Activated CD4-positive, alpha-beta T cell treated with anti-CD3 and anti-CD28 coated beads for 36 hours (primary cell): ENCODE measurements at regions of chr19 and their contacts with region 1.

Region 1: DNA sequence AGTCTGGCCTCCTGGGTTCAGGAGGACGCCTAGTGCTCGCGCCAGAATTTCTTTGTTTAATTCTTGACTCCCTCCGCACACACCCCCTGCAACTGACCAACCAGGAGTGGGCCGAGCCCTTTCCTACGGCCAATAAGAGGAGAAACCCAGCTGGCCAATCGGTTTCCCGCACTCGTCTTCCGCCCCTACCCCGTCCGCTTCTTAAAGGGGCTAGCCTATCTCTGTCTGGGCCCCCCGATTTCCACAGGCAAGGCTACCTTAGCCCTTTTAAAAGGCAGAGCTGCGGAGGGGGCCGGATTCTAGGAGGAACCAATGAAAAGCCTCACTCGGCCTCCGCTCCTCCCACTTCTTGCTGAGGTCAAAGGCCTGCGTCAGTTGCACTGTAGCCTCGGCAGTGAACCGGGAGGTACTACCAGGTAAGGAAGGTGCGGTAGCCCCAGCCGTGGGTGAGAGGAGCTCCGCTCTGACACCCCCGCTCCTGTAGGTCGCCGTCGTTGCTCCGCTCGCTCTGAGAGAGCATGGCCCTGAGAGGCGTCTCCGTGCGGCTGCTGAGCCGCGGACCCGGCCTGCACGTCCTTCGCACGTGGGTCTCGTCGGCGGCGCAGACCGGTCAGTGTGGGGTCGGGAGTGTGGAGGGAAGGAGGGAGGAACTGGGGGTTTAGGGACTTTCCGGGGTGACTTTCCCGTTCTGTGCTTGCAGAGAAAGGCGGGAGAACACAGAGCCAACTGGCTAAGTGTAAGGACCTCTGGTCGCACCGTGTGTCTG is at the start of gene GCDH:
- DNase-seq: peak; percentile 98
- ATAC-seq: peak; percentile 98
- H3K4me3 Mint-ChIP-seq: peak within 1 kb of the TSS; percentile 100
- H3K27ac Mint-ChIP-seq: peak within 1 kb of the TSS; percentile 90
- H3K4me1 Mint-ChIP-seq: peaks cover 18% of the 10 kb centered on the region
- H3K27me3 Mint-ChIP-seq: no peaks in the 10 kb centered on the region
- total RNA-seq, gene GCDH: 36.2 to 41.1 TPM

Region 2: DNA sequence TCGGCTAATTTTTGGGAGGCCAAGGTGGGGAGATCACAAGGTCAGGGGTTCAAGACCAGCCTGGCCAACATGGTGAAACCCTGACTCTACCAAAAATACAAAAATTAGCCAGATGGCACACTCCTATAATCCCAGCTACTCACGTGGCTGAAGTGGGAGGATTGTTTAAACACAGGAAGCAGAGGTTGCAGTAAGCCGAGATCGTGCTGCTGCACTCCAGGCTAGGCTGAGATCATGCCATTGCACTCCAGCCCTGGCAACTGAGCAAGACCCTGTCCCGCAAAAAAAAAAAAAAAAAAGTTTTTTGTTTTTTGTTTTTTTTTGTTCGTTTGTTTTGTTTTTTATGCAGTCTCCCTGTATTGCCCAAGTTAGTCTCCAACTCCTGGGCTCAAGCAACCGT is 31.4 kb before region 1 on chr19:
- CTCF ChIA-PET with region 1: no interaction called
- POLR2A ChIA-PET with region 1: no interaction called
- intact Hi-C with region 1: no loop called
- DNase-seq: no peak
- ATAC-seq: no peak
- H3K4me3 Mint-ChIP-seq: no peak overlapping the region
- H3K27ac Mint-ChIP-seq: no peak overlapping the region
- H3K4me1 Mint-ChIP-seq: no peaks in the 10 kb centered on the region
- H3K27me3 Mint-ChIP-seq: no peaks in the 10 kb centered on the region

Region 3: GRCh38 chr19:12872941-12873890 is 17.8 kb before region 1 on chr19:
- CTCF ChIA-PET with region 1: interaction called, 11 read pairs
- POLR2A ChIA-PET with region 1: interaction called, 9 read pairs
- intact Hi-C with region 1: no loop called
- DNase-seq: peak; percentile 83
- ATAC-seq: peak; percentile 77
- H3K4me3 Mint-ChIP-seq: peak overlapping the region; percentile 32
- H3K27ac Mint-ChIP-seq: no peak overlapping the region
- H3K4me1 Mint-ChIP-seq: no peaks in the 10 kb centered on the region
- H3K27me3 Mint-ChIP-seq: no peaks in the 10 kb centered on the region

Region 4: DNA sequence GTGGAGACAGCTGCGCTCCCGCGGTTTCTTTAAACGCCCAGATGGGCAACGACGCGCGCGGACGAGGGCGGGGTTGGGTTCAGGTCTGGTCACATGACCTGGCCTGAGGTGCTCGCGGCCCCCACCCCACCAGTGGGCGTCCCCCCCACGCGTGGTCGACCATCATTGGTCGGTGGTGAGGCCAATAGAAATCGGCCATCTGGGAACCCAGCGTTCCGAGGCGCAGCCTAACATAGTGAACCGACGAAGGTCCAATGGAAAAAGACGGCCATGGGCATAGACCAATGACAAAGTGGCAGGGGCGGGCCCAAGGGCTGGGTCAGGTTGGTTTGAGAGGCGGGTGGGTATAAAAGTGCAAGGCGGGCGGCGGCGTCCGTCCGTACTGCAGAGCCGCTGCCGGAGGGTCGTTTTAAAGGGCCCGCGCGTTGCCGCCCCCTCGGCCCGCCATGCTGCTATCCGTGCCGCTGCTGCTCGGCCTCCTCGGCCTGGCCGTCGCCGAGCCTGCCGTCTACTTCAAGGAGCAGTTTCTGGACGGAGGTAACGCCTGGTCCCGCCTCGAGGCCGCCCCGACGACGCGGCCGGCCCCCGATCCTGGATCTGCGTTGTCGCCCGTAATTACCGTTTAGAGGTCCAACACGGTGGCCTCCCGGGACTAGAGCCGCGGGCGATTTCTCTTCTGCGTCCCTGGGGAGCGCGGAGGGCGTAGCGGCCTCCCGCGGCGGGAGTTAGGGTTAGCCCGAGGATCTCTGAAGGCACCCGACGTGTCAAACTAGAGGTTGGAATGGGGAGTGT is 47.5 kb after region 1 on chr19 and contains the start of gene CALR:
- CTCF ChIA-PET with region 1: interaction called, 4 read pairs
- POLR2A ChIA-PET with region 1: interaction called, 7 read pairs
- intact Hi-C with region 1: loop called in 1 of 2 experiments (anchors 1 kb)
- DNase-seq: peak; percentile 99
- ATAC-seq: peak; percentile 89
- H3K4me3 Mint-ChIP-seq: peak within 1 kb of the TSS; percentile 99
- H3K27ac Mint-ChIP-seq: peak within 1 kb of the TSS; percentile 96
- H3K4me1 Mint-ChIP-seq: peaks cover 59% of the 10 kb centered on the region
- H3K27me3 Mint-ChIP-seq: no peaks in the 10 kb centered on the region
- total RNA-seq, gene CALR: 557 to 569 TPM

Region 5: DNA sequence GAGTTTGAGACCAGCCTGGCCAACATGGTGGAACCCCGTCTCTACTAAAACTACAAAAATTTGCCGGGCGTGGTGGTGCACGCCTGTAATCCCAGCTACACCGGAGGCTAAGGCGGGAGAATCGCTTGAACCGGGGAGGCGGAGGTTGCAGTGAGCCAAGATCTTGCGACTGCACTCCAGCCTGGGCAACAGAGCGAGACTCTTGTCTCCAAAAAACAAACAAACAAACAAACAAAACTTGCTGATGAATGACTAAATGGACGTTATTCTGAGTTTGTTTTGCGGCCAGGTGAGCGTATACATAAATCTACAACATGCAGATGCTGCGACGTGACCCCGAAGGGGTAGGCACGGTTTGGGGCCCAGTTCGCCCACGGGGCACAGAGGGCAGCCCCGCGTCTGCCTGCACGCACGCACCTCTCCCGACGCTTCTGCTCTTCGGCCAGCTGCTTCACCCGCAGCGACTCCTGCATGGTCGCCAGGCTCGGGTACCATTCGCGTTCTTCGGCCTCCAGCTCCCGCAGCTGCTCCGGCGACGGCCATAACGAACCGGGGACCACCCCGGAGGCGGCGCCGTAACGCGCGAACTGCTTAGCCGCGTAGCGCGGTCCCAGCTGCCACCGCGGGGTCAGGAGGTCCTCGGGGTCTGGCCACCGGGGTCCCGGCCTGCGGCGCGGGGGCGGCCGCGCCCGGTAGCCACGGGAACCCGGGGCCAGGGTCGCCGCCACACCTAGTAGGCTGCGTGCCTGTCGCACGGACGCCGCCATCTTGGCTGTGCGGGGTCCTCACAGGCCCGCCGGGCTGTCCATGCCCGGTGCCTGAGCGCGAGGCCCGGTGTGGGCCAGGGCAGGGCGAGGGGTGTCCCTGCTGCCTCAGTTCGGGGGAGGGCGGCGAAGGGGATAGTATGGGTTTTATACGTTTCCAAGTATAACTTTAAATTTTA is 65.7 kb after region 1 on chr19 and contains the start of gene GADD45GIP1:
- CTCF ChIA-PET with region 1: no interaction called
- POLR2A ChIA-PET with region 1: interaction called, 6 read pairs
- intact Hi-C with region 1: loop called in 1 of 2 experiments (anchors 1 kb)
- DNase-seq: peak; percentile 91
- ATAC-seq: peak; percentile 93
- H3K4me3 Mint-ChIP-seq: peak within 1 kb of the TSS; percentile 91
- H3K27ac Mint-ChIP-seq: peak within 1 kb of the TSS; percentile 97
- H3K4me1 Mint-ChIP-seq: peaks cover 32% of the 10 kb centered on the region
- H3K27me3 Mint-ChIP-seq: no peaks in the 10 kb centered on the region
- total RNA-seq, gene GADD45GIP1: 31.1 to 36.3 TPM

Region 6: DNA sequence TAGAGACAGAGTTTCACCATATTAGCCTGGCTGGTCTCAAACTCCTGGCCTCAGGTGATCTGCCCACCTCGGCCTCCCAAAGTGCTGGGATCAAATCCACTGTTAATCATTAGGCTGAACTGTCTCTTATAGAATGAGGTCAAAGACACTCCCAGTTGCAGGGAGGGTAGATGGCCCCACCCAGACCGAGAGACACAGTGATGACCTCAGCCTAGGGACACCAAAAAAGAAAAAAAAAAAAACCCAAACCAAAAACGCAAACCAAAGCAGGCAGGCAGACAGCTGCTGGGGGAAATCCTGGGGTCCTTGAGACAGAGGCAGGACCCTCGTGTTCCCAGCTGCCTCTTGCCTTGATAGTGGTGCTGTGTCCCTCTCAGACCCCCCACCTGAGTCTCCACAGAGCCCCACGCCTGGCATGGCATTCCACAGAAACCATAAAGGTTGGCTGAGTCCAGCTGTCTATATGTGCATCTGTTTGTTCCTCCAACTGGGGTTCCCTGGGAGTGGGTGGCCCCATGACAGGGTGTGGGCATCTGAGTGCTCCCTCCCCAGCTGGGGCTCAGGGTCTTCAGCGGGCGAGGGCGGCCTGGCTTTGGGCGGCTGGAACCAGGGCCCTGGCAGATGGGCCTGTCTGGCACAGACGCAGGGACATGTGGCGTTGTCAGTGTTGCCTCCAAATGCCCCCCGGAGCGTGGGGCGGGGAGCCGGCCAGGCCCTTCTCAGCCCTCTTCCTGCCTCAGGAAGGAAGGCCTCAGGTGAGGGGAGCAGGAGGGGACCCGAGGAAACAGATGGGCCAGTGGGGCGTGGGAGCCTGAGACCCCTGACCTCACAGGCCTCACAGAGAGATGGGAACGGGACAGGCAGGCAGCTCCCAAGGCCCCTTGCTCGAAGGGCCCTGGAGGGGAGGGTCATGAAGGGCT is 83.6 kb after region 1 on chr19:
- CTCF ChIA-PET with region 1: no interaction called
- POLR2A ChIA-PET with region 1: no interaction called
- intact Hi-C with region 1: no loop called
- DNase-seq: no peak
- ATAC-seq: no peak
- H3K4me3 Mint-ChIP-seq: no peak overlapping the region
- H3K27ac Mint-ChIP-seq: no peak overlapping the region
- H3K4me1 Mint-ChIP-seq: peaks cover 8% of the 10 kb centered on the region
- H3K27me3 Mint-ChIP-seq: peaks cover 7% of the 10 kb centered on the region

Region 7: GRCh38 chr19:13002166-13002898 is 111.4 kb after region 1 on chr19:
- CTCF ChIA-PET with region 1: no interaction called
- POLR2A ChIA-PET with region 1: no interaction called
- intact Hi-C with region 1: no loop called
- DNase-seq: no peak
- ATAC-seq: no peak
- H3K4me3 Mint-ChIP-seq: no peak overlapping the region
- H3K27ac Mint-ChIP-seq: no peak overlapping the region
- H3K4me1 Mint-ChIP-seq: no peaks in the 10 kb centered on the region
- H3K27me3 Mint-ChIP-seq: no peaks in the 10 kb centered on the region

Region 8: DNA sequence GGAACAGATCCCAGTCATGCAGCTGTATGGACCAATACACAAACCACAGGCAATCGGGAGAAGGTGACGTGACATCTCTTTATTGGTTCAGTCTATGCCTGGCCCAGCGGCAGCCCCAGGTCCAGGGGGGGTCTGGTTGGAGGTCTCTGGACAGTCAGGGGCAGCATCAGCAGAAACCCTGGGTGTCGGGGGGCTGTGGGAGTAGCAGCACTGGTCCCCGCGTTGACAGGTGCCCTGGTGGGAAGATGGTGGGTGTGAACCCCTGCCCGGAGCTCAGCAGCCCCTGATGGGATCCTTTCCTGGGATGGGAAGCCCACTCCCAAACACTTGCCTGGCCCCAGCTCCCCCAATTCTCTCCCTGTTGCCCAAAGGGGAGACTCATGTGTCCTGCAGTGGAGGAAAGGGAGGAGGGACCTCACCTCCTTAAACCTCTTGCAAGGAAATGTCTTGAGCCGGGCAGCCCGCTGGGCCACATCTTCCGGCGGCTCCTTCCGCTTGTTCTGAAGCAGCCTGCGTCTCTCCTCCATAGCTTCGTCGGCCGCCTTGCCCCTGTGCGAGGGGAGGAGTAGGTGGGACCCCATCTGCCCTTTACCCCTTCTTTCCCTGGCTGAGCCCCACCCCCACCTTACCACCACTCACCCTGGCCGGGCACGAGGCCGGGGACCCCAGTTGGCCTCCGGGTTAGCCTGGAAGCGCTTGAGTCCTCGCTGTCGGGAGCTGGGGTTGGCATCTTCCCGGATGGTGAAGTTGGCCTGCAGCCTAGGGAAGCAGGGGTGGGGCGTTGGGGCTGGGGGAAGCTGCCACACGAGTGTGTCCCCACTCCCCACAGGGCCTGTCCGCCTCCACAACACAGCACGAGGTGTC is 214.1 kb after region 1 on chr19:
- CTCF ChIA-PET with region 1: no interaction called
- POLR2A ChIA-PET with region 1: no interaction called
- intact Hi-C with region 1: no loop called
- DNase-seq: peak; percentile 50
- ATAC-seq: peak; percentile 23
- H3K4me3 Mint-ChIP-seq: peak overlapping the region; percentile 78
- H3K27ac Mint-ChIP-seq: peak overlapping the region; percentile 90
- H3K4me1 Mint-ChIP-seq: peaks cover 27% of the 10 kb centered on the region
- H3K27me3 Mint-ChIP-seq: no peaks in the 10 kb centered on the region